A673 (cell line): ENCODE measurements at regions of chr12 and their contacts with region 1.

Region 1: GRCh38 chr12:123807670-123808069 is 45.6 kb downstream of the DNAH10 start:
- DNase-seq: peak; percentile 11
- H3K4me3 ChIP-seq: no peak overlapping the region
- H3K27ac ChIP-seq: no peak overlapping the region
- H3K4me1 ChIP-seq: no peaks in the 10 kb centered on the region
- H3K27me3 ChIP-seq: no peaks in the 10 kb centered on the region
- CTCF ChIP-seq: no peak

Region 2: DNA sequence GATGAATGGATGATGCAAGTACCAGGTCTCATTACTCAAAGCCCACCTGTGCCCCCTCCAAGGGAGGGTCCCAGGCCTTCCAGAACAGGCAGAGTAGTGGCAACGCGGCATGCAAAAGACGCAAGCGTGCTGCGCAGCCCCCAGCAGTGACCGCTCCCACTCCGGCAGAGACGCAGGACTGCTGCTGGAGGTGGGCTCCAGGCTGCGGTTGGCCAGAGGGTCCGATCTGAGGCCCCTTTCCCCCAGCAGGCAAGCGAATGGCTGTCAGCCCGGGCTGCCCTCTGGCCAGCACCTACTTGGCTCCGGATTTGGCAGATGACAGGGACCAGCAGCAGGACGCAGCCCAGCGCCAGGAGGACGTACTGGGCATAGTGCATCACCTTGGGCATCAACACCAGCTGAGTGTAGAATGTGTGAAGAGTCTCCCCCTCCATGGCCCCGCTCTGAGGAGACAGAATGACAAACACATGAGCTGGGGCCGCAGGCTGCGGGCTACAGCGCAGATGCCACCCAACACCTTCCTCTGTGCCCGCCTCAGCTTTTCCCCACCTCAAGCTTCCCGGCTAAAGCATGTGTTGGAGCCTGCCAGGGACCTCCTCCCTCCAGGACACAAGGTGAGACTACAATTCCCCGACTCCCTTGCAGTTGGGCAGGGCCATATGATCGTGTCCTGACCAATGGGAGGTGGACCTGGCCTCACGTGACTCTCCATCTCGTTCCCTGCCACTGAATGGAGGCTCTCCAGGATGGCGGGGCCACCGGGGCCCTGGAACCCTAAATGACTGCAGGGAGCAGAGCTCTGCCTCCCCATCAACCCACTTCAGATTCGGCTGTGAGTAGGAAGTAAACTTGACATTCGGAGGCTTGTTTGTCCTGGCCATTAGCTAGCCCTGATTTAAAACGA is 978.6 kb after region 1 on chr12:
- CTCF ChIA-PET with region 1: interaction called, 19 read pairs
- POLR2A ChIA-PET with region 1: no interaction called
- intact Hi-C with region 1: no loop called
- DNase-seq: no peak
- H3K4me3 ChIP-seq: no peak overlapping the region
- H3K27ac ChIP-seq: no peak overlapping the region
- H3K4me1 ChIP-seq: no peaks in the 10 kb centered on the region
- H3K27me3 ChIP-seq: no peaks in the 10 kb centered on the region
- CTCF ChIP-seq: no peak